Body of pancreas (tissue), 4 donors: ENCODE measurements at regions of chr6 and their contacts with region 1.

Region 1: GRCh38 chr6:129603741-129604140 is 106.2 kb downstream of the ARHGAP18 start:
- DNase-seq: no peak
- ATAC-seq: no peak
- H3K4me3 ChIP-seq: no peak overlapping the region
- H3K27ac ChIP-seq: no peak overlapping the region
- H3K4me1 ChIP-seq: no peaks in the 10 kb centered on the region
- H3K27me3 ChIP-seq: no peaks in the 10 kb centered on the region
- CTCF ChIP-seq: no peak
- POLR2A ChIP-seq: no peak

Region 2: GRCh38 chr6:129031051-129031599 is 572.6 kb before region 1 on chr6:
- intact Hi-C with region 1: no loop called
- DNase-seq: no peak
- ATAC-seq: no peak
- H3K4me3 ChIP-seq: no peak overlapping the region
- H3K27ac ChIP-seq: no peak overlapping the region
- H3K4me1 ChIP-seq: no peaks in the 10 kb centered on the region
- H3K27me3 ChIP-seq: no peaks in the 10 kb centered on the region
- CTCF ChIP-seq: no peak
- POLR2A ChIP-seq: no peak

Region 3: DNA sequence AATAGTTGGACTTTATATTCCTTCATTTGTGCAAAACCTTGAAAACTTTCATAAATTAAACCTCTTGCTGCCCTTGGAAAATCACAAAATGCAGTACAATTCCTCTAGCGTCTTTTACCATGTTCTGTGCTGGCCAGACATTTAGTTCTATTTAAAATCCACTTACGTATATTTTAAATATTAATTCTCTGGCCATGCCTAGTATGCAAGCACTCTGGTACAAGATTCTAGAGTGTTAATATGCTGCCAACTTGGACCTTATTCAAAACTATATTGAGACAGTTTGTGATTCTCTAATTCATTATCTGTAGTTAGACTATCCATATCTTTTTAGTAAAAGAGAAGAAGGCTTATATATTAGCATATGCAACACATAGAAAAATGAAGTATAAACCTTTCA is 221.9 kb before region 1 on chr6:
- intact Hi-C with region 1: no loop called
- DNase-seq: no peak
- ATAC-seq: no peak
- H3K4me3 ChIP-seq: no peak overlapping the region
- H3K27ac ChIP-seq: no peak overlapping the region
- H3K4me1 ChIP-seq: no peaks in the 10 kb centered on the region
- H3K27me3 ChIP-seq: no peaks in the 10 kb centered on the region
- CTCF ChIP-seq: no peak
- POLR2A ChIP-seq: no peak

Region 4: DNA sequence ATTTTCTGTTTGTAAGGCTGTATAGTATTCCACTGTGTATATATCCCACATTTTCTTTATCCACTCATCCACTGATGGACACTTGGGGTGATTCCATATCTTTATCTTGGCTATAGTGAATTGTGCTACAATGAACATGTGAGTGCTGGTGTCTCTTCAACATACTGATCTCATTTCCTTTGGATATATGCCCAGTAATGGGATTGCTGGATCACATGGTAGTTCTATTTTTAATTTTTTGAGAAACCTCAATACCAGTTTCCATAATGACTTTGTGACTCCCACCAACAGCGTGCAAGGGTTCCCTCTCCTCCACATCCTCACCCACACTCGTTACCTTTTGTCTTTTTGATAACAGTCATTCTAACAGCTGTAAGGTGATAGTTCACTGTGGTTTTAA is 59.8 kb before region 1 on chr6:
- intact Hi-C with region 1: no loop called
- DNase-seq: no peak
- ATAC-seq: no peak
- H3K4me3 ChIP-seq: no peak overlapping the region
- H3K27ac ChIP-seq: no peak overlapping the region
- H3K4me1 ChIP-seq: no peaks in the 10 kb centered on the region
- H3K27me3 ChIP-seq: no peaks in the 10 kb centered on the region
- CTCF ChIP-seq: no peak
- POLR2A ChIP-seq: no peak

Region 5: DNA sequence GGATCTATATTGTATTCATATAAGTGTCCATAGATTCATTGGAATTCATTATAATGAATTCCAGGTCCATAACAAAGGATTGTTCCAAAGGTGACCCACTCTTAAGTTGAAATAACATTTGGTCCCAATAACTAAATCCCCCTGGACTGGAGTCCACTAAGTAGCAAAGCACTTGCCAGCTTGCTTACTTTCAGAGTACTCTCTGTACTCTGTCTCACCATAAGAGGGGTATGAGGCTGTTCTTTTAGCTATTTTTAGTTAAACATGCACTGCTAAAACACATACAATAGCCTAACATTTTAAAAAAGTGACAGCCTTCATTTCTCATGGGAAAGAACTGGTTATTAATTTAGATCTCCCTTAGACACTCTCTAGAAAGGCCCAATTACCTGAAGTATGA is 122.9 kb after region 1 on chr6:
- intact Hi-C with region 1: loop called (anchors 5 kb)
- DNase-seq: no peak
- ATAC-seq: no peak
- H3K4me3 ChIP-seq: no peak overlapping the region
- H3K27ac ChIP-seq: no peak overlapping the region
- H3K4me1 ChIP-seq: peaks cover 8% of the 10 kb centered on the region
- H3K27me3 ChIP-seq: no peaks in the 10 kb centered on the region
- CTCF ChIP-seq: no peak
- POLR2A ChIP-seq: no peak